ENCODE measurements at regions of chr3 and their contacts with region 1.

Region 1: GRCh38 chr3:196624067-196624790 is 15.3 kb upstream of the NRROS start:
- DNase-seq: peak; percentile 35
- H3K4me3 Mint-ChIP-seq: peak overlapping the region; percentile 41
- H3K27ac Mint-ChIP-seq: peak overlapping the region; percentile 65
- H3K4me1 Mint-ChIP-seq: peaks cover 47% of the 10 kb centered on the region
- H3K27me3 Mint-ChIP-seq: no peaks in the 10 kb centered on the region

Region 2: DNA sequence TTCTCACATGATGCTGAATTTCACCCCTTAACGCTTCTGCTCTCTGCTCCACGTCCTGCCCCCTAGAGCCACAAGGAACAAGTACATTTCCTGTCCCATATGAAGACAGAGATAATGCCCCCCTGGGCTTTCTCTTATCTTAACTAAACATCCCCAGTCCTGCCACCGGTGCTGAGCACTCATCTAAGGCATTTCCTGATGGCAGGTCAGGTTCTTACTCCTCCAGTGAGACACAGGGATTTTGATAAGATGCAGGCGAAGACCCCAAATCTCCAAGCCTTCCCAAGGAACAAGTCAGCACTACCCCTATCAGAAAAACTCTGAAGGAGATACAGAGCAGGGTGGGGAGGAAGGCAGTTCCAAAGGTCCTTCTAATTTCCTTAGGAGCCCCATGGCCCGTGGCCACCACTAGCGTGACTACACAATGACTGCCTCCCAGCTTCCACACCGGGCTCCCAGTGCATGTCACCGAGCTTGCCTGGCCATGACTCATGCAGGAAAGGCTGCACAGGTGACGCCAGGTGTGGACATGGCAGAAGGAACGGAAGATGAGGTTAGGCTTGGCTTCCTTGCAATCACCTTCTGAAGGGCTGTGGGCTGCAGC is 1506.1 kb before region 1 on chr3:
- intact Hi-C with region 1: no loop called
- DNase-seq: no peak
- H3K4me3 Mint-ChIP-seq: no peak overlapping the region
- H3K27ac Mint-ChIP-seq: no peak overlapping the region
- H3K4me1 Mint-ChIP-seq: no peaks in the 10 kb centered on the region
- H3K27me3 Mint-ChIP-seq: no peaks in the 10 kb centered on the region

Region 3: DNA sequence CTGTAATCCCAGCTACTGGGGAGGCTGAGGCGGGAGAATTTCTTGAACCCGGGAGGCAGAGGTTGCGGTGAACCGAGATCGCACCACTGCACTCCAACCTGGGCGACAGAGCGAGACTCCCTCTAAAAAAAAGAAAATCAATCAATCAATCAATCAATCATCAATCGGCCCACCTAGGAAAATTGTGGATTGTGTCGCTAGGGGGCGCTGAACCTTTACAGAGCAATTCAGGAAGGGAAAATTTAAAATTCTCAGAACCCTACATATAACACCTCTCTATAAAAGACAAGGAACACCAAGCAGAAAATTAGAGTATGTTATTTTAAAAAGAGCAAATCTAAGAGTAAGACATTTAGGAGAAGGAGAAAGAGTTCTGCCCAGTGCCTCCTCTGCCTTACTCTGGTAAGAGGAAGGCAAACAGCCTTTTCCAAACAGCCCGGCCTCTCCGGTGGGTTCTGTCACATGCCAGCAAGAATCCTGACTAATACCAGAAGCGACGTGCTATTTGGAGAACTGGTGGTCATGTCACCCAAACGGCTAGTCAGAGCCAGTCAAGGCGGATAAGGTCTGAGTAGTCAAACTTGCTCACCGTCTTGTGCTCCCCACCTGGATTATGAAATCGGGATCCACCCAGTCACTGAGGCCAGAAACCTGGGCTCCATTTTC is 86.8 kb before region 1 on chr3:
- intact Hi-C with region 1: no loop called
- DNase-seq: peak; percentile 40
- H3K4me3 Mint-ChIP-seq: no peak overlapping the region
- H3K27ac Mint-ChIP-seq: no peak overlapping the region
- H3K4me1 Mint-ChIP-seq: peaks cover 9% of the 10 kb centered on the region
- H3K27me3 Mint-ChIP-seq: no peaks in the 10 kb centered on the region

Region 4: GRCh38 chr3:196639483-196640296 is 15.5 kb after region 1 on chr3 and contains the start of gene NRROS:
- intact Hi-C with region 1: loop called (anchors 2 kb)
- DNase-seq: peak; percentile 71
- H3K4me3 Mint-ChIP-seq: peak within 1 kb of the TSS; percentile 96
- H3K27ac Mint-ChIP-seq: peak within 1 kb of the TSS; percentile 99
- H3K4me1 Mint-ChIP-seq: peaks cover 57% of the 10 kb centered on the region
- H3K27me3 Mint-ChIP-seq: no peaks in the 10 kb centered on the region
- total RNA-seq, gene NRROS: 51.4 and 53.2 TPM in 2 replicates

Region 5: GRCh38 chr3:196849180-196849741 is 225.0 kb after region 1 on chr3:
- intact Hi-C with region 1: no loop called
- DNase-seq: no peak
- H3K4me3 Mint-ChIP-seq: no peak overlapping the region
- H3K27ac Mint-ChIP-seq: no peak overlapping the region
- H3K4me1 Mint-ChIP-seq: peaks cover 2% of the 10 kb centered on the region
- H3K27me3 Mint-ChIP-seq: no peaks in the 10 kb centered on the region

Region 6: DNA sequence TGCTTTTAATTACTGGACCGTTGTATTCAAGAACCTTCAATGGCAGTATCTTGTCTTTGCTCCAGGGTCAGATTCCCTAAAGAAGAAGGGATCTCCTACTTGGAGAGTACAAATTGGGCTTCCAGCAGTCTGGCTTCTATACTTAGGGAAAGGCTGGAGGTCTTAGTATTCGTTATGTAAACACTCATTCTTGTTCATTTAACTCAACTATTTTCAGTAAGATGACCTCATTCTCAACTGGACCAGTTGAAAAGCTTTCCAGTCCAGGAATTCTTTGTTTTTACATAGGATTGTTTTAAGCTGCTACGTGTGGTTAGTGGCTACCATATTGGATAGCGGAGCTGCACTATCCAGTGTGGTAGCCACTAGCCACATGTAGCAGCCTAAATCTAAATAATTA is 248.1 kb after region 1 on chr3:
- intact Hi-C with region 1: no loop called
- DNase-seq: no peak
- H3K4me3 Mint-ChIP-seq: no peak overlapping the region
- H3K27ac Mint-ChIP-seq: no peak overlapping the region
- H3K4me1 Mint-ChIP-seq: peaks cover 17% of the 10 kb centered on the region
- H3K27me3 Mint-ChIP-seq: no peaks in the 10 kb centered on the region